Psoas muscle (tissue), 8 donors: ENCODE measurements at regions of chr11 and their contacts with region 1.

Region 1: GRCh38 chr11:46427364-46427763 is 35.8 kb upstream of the CHRM4 start:
- DNase-seq: no peak
- ATAC-seq: peak in 1 of 4 donors; percentile 44
- H3K4me3 ChIP-seq: no peak overlapping the region
- H3K27ac ChIP-seq: no peak overlapping the region
- H3K4me1 ChIP-seq: no peaks in the 10 kb centered on the region
- H3K27me3 ChIP-seq: no peaks in the 10 kb centered on the region
- CTCF ChIP-seq: no peak

Region 2: GRCh38 chr11:46361283-46362155 is 65.8 kb before region 1 on chr11:
- intact Hi-C with region 1: no loop called
- DNase-seq: peak; percentile 80 to 92
- ATAC-seq: peak; percentile 76 to 78 (median 77)
- H3K4me3 ChIP-seq: peak overlapping the region; percentile 76
- H3K27ac ChIP-seq: peak overlapping the region; percentile 98
- H3K4me1 ChIP-seq: peaks cover 44% of the 10 kb centered on the region
- H3K27me3 ChIP-seq: no peaks in the 10 kb centered on the region
- CTCF ChIP-seq: no peak

Region 3: GRCh38 chr11:46461461-46461927 is 34.1 kb after region 1 on chr11:
- intact Hi-C with region 1: loop called in 1 of 2 experiments (anchors 5 kb)
- DNase-seq: no peak
- ATAC-seq: no peak
- H3K4me3 ChIP-seq: no peak overlapping the region
- H3K27ac ChIP-seq: no peak overlapping the region
- H3K4me1 ChIP-seq: peaks cover 4% of the 10 kb centered on the region
- H3K27me3 ChIP-seq: no peaks in the 10 kb centered on the region
- CTCF ChIP-seq: no peak

Region 4: DNA sequence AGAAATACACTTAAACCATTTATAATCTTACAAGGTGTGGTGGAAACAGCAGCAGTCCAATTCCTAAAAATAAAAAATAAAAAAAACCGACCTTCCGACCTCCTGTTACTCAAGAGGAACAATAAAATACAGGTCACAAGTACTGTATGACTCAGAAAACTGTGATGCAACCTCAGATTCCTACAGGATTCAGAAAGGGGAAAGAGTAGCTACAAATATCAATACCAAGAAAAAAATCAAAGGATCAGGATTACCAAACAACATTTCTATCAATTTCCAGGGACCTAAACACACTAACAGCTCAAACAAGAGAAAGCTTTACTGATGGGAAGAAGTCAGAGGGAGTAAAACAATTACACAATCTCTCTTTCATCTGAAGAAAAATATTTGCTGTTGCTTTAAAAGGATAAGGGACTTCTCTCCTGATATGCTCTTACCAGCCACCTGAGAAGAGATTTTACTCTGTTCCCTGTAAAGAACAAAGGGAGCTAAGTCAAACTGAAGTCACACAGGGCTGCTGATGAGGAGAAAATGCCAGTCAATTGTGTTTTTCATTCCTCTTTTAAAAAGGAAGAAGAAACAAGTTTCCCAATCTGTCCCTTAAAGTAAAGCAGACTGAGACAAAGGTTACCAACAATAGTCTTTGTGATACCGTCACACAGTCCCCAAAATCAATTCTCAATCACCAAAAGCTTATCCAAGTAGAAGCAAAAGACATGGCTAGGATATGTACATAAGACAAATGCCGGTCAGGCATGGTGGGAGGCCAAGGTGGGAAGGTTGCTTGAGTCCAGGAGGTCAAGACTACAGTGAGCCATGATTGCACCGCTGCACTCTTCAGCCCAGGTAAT is 127.1 kb after region 1 on chr11:
- intact Hi-C with region 1: no loop called
- DNase-seq: no peak
- ATAC-seq: peak; percentile 80 to 93 (median 86)
- H3K4me3 ChIP-seq: peak overlapping the region; percentile 3
- H3K27ac ChIP-seq: peak overlapping the region; percentile 83
- H3K4me1 ChIP-seq: peaks cover 35% of the 10 kb centered on the region
- H3K27me3 ChIP-seq: no peaks in the 10 kb centered on the region
- CTCF ChIP-seq: no peak